A549 (cell line): ENCODE measurements at regions of chr15 and their contacts with region 1.

Region 1: DNA sequence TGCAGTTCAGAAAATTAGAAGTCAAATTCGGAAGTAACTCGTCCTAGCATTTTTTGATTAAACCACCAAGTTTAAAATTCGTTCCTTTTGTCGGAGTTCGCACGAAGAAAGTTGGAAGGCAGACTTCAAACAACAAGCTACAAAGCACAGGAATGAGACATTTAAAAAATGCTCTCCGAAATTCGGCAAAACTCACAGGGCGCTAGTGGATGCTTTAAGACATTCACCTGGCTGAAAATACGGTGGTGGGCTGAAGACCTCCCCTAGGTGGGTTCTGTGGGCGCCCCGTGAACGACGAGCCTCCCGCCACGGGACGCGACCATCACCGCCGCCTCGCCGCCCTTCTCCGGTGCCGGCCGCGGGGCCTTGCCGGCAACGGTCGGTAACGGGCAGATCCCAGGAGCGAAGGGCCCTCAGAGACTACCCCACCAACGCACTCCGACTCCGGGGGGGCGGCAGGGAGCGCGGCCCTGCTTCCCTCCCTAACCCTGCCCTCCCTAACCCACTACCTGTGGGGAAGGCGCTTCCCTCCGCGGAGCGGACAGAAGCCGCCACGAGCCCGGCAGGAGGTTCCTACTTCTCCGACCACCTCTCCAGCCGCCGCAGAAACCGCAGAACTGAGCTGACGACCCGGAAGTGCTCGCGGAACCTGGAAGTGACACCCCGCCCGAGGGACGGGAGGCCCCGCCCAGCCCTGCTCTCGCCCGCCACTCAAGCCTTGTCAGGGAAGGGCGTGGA is at the start of gene GTF2A2:
- DNase-seq: peak; percentile 95 to 96
- ATAC-seq: peak; percentile 98 to 100
- H3K4me3 ChIP-seq: peak within 1 kb of the TSS; percentile 95
- H3K27ac ChIP-seq: peak within 1 kb of the TSS; percentile 91 to 93
- H3K4me1 ChIP-seq: peaks cover 12% of the 10 kb centered on the region
- CTCF ChIP-seq: no peak
- EP300 ChIP-seq: no peak
- POLR2A ChIP-seq: peak; percentile 83
- RAD21 ChIP-seq: 0 out of 5 replicates have a peak, but pooled peaks of 1 of the 2 experiments have one; percentile 11
- polyA plus RNA-seq, gene GTF2A2: 137 and 220 TPM in 2 replicates

Region 2: GRCh38 chr15:59501597-59501996 is 155.5 kb before region 1 on chr15:
- CTCF ChIA-PET with region 1: no interaction called
- POLR2A ChIA-PET with region 1: no interaction called
- DNase-seq: peak; percentile 80 to 90
- ATAC-seq: peak; percentile 95 to 97
- H3K4me3 ChIP-seq: no peak overlapping the region
- H3K27ac ChIP-seq: no peak overlapping the region
- H3K4me1 ChIP-seq: no peaks in the 10 kb centered on the region
- CTCF ChIP-seq: peak; percentile 98
- EP300 ChIP-seq: no peak
- POLR2A ChIP-seq: no peak
- RAD21 ChIP-seq: peak; percentile 95 to 97

Region 3: GRCh38 chr15:59642351-59642750 is 14.7 kb before region 1 on chr15:
- CTCF ChIA-PET with region 1: interaction called, 11 read pairs
- POLR2A ChIA-PET with region 1: interaction called, 6 read pairs
- DNase-seq: no peak
- ATAC-seq: no peak
- H3K4me3 ChIP-seq: no peak overlapping the region
- H3K27ac ChIP-seq: no peak overlapping the region
- H3K4me1 ChIP-seq: peaks cover 6% of the 10 kb centered on the region
- CTCF ChIP-seq: peak; percentile 49
- EP300 ChIP-seq: no peak
- POLR2A ChIP-seq: no peak
- RAD21 ChIP-seq: peak; percentile 28 to 52; a peak in 3 of 5 replicates

Region 4: DNA sequence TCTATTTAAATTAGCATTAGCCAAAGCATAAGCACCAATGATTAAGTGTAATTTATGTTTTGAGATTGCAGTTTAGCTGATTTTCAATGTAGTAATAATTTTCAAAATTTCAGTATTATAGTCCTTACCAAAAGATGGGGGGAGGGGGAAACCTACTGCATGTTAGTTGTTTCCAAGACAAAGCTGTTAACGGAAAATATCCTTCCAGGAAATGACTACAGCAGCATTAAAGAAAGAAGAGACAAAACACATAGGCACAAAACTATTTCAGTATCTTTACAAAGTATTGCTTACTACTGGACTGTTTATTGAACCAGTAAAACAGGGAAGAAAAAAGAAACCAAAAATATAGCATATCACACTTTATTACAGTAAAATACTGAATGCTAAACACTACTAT is 21.6 kb after region 1 on chr15:
- CTCF ChIA-PET with region 1: no interaction called
- POLR2A ChIA-PET with region 1: no interaction called
- DNase-seq: no peak
- ATAC-seq: no peak
- H3K4me3 ChIP-seq: no peak overlapping the region
- H3K27ac ChIP-seq: no peak overlapping the region
- H3K4me1 ChIP-seq: no peaks in the 10 kb centered on the region
- CTCF ChIP-seq: no peak
- EP300 ChIP-seq: no peak
- POLR2A ChIP-seq: no peak
- RAD21 ChIP-seq: no peak

Region 5: DNA sequence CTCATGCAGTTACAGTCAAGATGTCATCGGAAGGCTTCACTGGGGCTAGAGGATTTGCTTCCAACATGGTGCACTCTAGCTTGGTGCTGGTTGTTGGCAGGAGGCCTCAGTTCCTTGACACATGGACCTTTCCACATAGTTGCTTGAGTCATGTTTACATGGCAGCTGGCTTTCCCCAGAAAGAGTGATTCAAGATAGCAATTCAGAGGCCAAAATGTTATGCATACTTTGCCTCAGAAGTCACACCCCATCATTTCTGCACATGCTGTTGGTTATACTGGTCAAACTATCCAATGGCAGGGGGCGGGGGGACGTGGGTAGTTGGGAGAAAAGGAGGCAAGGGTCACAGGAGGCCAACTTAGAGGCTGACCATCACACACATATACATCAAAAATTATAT is 405.8 kb after region 1 on chr15:
- CTCF ChIA-PET with region 1: no interaction called
- POLR2A ChIA-PET with region 1: no interaction called
- DNase-seq: no peak
- ATAC-seq: no peak
- H3K4me3 ChIP-seq: no peak overlapping the region
- H3K27ac ChIP-seq: no peak overlapping the region
- H3K4me1 ChIP-seq: no peaks in the 10 kb centered on the region
- CTCF ChIP-seq: no peak
- EP300 ChIP-seq: no peak
- POLR2A ChIP-seq: no peak
- RAD21 ChIP-seq: no peak